Astrocyte of the cerebellum (primary cell): ENCODE measurements at regions of chr16 and their contacts with region 1.

Region 1: GRCh38 chr16:85574672-85575475 is 38.2 kb upstream of the GSE1 start:
- DNase-seq: no peak
- H3K4me3 ChIP-seq: no peak overlapping the region
- CTCF ChIP-seq: no peak

Region 2: GRCh38 chr16:85473909-85474620 is 100.8 kb before region 1 on chr16:
- in situ Hi-C with region 1: loop called (anchors 5 kb)
- DNase-seq: no peak
- H3K4me3 ChIP-seq: no peak overlapping the region
- CTCF ChIP-seq: no peak